ENCODE measurements at regions of chr17 and their contacts with region 1.

Region 1: GRCh38 chr17:72118335-72119076 is 2.3 kb upstream of the SOX9 start:
- DNase-seq: peak in 2 of 5 donors; percentile 4 to 15
- H3K4me3 ChIP-seq: no peak overlapping the region
- H3K4me3 Mint-ChIP-seq: peak overlapping the region in 6 of 8 donors; percentile 17 to 64 (median 49)
- H3K27ac ChIP-seq: no peak overlapping the region
- H3K27ac Mint-ChIP-seq: no peak overlapping the region
- H3K4me1 ChIP-seq: peaks cover 7% of the 10 kb centered on the region
- H3K4me1 Mint-ChIP-seq: peaks cover 7 to 45% (median 15%) of the 10 kb centered on the region in 4 donors
- H3K27me3 ChIP-seq: peaks cover 24% of the 10 kb centered on the region
- H3K27me3 Mint-ChIP-seq: peaks cover 39 to 51% of the 10 kb centered on the region in 2 donors

Region 2: DNA sequence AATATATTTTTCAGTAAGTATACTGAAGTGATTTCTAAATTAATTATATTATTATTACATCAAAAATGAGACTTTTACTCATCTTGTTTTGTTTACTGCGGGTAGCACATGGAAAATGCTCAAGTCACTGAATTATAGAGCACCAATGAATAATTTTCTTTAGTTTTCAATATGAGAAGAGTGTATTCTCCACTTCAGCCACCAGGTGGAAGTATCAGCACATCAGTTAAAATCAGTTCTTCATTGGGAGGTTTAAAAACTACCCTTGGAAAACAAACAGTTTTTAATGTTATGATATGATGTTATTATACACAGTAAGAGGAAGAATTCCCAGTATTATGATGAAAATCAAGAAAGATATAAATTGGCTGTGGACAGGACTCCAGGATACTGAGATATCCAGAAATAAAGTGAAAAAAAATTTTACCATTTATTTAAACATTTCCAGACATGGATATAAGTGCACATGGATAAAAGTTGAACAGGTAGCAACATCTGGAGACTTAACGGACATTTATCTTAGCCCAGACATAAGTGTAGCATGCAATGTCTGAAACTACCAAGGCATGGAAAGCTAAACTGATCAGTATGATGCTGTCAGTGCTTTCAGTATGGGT is 1481.9 kb before region 1 on chr17:
- CTCF ChIA-PET with region 1: no interaction called
- POLR2A ChIA-PET with region 1: no interaction called
- intact Hi-C with region 1: loop called (anchors 5 kb)
- DNase-seq: peak in 3 of 5 donors; percentile 5 to 9 (median 7)
- H3K4me3 ChIP-seq: no peak overlapping the region
- H3K4me3 Mint-ChIP-seq: no peak overlapping the region
- H3K27ac ChIP-seq: no peak overlapping the region
- H3K27ac Mint-ChIP-seq: no peak overlapping the region
- H3K4me1 ChIP-seq: no peaks in the 10 kb centered on the region
- H3K4me1 Mint-ChIP-seq: no peaks in the 10 kb centered on the region
- H3K27me3 ChIP-seq: no peaks in the 10 kb centered on the region
- H3K27me3 Mint-ChIP-seq: no peaks in the 10 kb centered on the region

Region 3: DNA sequence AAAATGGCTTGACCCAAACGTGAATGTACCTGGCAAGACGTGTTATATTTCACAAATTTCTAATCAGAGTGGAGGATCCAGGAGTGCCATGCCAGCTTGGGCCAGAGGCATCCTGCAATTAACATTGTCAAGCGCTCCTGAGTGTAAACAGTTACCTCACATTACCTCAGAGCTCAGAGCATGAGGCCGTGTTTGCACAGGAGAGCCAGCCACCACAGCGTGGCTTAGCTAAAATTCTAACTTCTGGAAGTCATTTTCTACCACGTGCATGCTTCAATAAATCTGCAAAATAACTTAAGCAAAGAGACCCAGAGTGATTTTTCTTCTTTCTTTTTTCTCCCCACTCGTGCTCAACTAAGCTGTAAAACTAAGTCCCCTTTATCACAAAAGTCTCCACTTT is 1180.2 kb before region 1 on chr17:
- CTCF ChIA-PET with region 1: no interaction called
- POLR2A ChIA-PET with region 1: no interaction called
- intact Hi-C with region 1: loop called (anchors 10 kb)
- DNase-seq: no peak
- H3K4me3 ChIP-seq: no peak overlapping the region
- H3K4me3 Mint-ChIP-seq: no peak overlapping the region
- H3K27ac ChIP-seq: no peak overlapping the region
- H3K27ac Mint-ChIP-seq: no peak overlapping the region
- H3K4me1 ChIP-seq: no peaks in the 10 kb centered on the region
- H3K4me1 Mint-ChIP-seq: no peaks in the 10 kb centered on the region
- H3K27me3 ChIP-seq: no peaks in the 10 kb centered on the region
- H3K27me3 Mint-ChIP-seq: no peaks in the 10 kb centered on the region

Region 4: GRCh38 chr17:71472809-71473789 is 645.4 kb before region 1 on chr17:
- CTCF ChIA-PET with region 1: no interaction called
- POLR2A ChIA-PET with region 1: no interaction called
- intact Hi-C with region 1: loop called (anchors 5 kb)
- DNase-seq: no peak
- H3K4me3 ChIP-seq: no peak overlapping the region
- H3K4me3 Mint-ChIP-seq: no peak overlapping the region
- H3K27ac ChIP-seq: no peak overlapping the region
- H3K27ac Mint-ChIP-seq: no peak overlapping the region
- H3K4me1 ChIP-seq: no peaks in the 10 kb centered on the region
- H3K4me1 Mint-ChIP-seq: no peaks in the 10 kb centered on the region
- H3K27me3 ChIP-seq: no peaks in the 10 kb centered on the region
- H3K27me3 Mint-ChIP-seq: peaks cover 0 to 1% of the 10 kb centered on the region in 2 donors

Region 5: GRCh38 chr17:71959154-71959553 is 159.4 kb before region 1 on chr17:
- CTCF ChIA-PET with region 1: no interaction called
- POLR2A ChIA-PET with region 1: no interaction called
- intact Hi-C with region 1: loop called (anchors 5 kb)
- DNase-seq: no peak
- H3K4me3 ChIP-seq: no peak overlapping the region
- H3K4me3 Mint-ChIP-seq: no peak overlapping the region
- H3K27ac ChIP-seq: no peak overlapping the region
- H3K27ac Mint-ChIP-seq: no peak overlapping the region
- H3K4me1 ChIP-seq: no peaks in the 10 kb centered on the region
- H3K4me1 Mint-ChIP-seq: no peaks in the 10 kb centered on the region
- H3K27me3 ChIP-seq: no peaks in the 10 kb centered on the region
- H3K27me3 Mint-ChIP-seq: no peaks in the 10 kb centered on the region

Region 6: GRCh38 chr17:72004611-72005331 is 113.7 kb before region 1 on chr17:
- CTCF ChIA-PET with region 1: no interaction called
- POLR2A ChIA-PET with region 1: no interaction called
- intact Hi-C with region 1: loop called (anchors 5 kb)
- DNase-seq: no peak
- H3K4me3 ChIP-seq: no peak overlapping the region
- H3K4me3 Mint-ChIP-seq: no peak overlapping the region
- H3K27ac ChIP-seq: no peak overlapping the region
- H3K27ac Mint-ChIP-seq: no peak overlapping the region
- H3K4me1 ChIP-seq: no peaks in the 10 kb centered on the region
- H3K4me1 Mint-ChIP-seq: no peaks in the 10 kb centered on the region
- H3K27me3 ChIP-seq: no peaks in the 10 kb centered on the region
- H3K27me3 Mint-ChIP-seq: peaks cover 0 to 2% of the 10 kb centered on the region in 2 donors

Region 7: DNA sequence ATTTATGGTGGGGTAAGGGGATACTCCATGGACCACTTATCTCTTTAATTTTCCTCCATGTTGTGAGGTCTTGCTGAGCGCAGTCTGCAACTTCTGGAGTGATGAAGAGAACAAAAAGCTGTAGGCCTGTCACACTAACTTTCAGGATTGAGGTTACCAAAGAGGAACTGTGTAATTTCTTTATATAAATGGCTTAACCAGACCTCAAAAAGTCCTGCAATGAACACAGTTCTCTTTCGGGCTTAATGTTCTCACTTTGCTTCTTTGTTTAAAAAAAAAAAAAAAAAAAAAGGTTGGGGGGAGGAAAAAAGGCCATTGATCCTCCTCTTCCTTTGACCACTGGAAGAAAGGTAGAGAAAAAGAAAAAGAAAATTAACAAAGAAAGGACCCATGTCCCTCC is 84.5 kb before region 1 on chr17:
- CTCF ChIA-PET with region 1: no interaction called
- POLR2A ChIA-PET with region 1: no interaction called
- intact Hi-C with region 1: no loop called
- DNase-seq: no peak
- H3K4me3 ChIP-seq: no peak overlapping the region
- H3K4me3 Mint-ChIP-seq: no peak overlapping the region
- H3K27ac ChIP-seq: no peak overlapping the region
- H3K27ac Mint-ChIP-seq: no peak overlapping the region
- H3K4me1 ChIP-seq: peaks cover 10% of the 10 kb centered on the region
- H3K4me1 Mint-ChIP-seq: peaks cover 10 to 22% (median 14%) of the 10 kb centered on the region in 4 donors
- H3K27me3 ChIP-seq: no peaks in the 10 kb centered on the region
- H3K27me3 Mint-ChIP-seq: peaks cover 3 to 8% of the 10 kb centered on the region in 2 donors

Region 8: GRCh38 chr17:72053449-72053848 is 65.1 kb before region 1 on chr17:
- CTCF ChIA-PET with region 1: no interaction called
- POLR2A ChIA-PET with region 1: no interaction called
- intact Hi-C with region 1: no loop called
- DNase-seq: no peak
- H3K4me3 ChIP-seq: no peak overlapping the region
- H3K4me3 Mint-ChIP-seq: no peak overlapping the region
- H3K27ac ChIP-seq: no peak overlapping the region
- H3K27ac Mint-ChIP-seq: no peak overlapping the region
- H3K4me1 ChIP-seq: no peaks in the 10 kb centered on the region
- H3K4me1 Mint-ChIP-seq: no peaks in the 10 kb centered on the region
- H3K27me3 ChIP-seq: no peaks in the 10 kb centered on the region
- H3K27me3 Mint-ChIP-seq: peaks cover 0 to 7% of the 10 kb centered on the region in 2 donors

Region 9: DNA sequence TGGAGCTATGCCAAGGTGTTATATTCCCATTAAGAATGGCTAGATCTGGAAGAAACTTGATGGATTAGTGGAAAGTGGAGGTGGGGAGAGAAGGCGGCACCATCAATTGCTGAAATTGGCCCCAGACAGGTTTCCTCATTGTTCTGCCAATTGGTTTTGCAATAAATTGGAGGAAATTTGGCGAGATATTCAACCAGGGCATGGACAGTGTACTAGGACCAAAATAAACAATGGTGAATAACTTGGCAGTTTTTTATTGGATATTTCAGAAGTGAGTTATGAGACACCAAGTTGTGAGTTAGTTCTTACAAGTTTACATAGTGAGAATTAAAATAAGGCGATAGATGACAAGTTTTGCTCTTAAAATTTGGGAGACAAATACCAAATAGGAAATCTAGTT is 38.8 kb before region 1 on chr17:
- CTCF ChIA-PET with region 1: no interaction called
- POLR2A ChIA-PET with region 1: no interaction called
- intact Hi-C with region 1: no loop called
- DNase-seq: no peak
- H3K4me3 ChIP-seq: no peak overlapping the region
- H3K4me3 Mint-ChIP-seq: no peak overlapping the region
- H3K27ac ChIP-seq: no peak overlapping the region
- H3K27ac Mint-ChIP-seq: no peak overlapping the region
- H3K4me1 ChIP-seq: no peaks in the 10 kb centered on the region
- H3K4me1 Mint-ChIP-seq: peaks cover 0 to 9% (median 3%) of the 10 kb centered on the region in 4 donors
- H3K27me3 ChIP-seq: no peaks in the 10 kb centered on the region
- H3K27me3 Mint-ChIP-seq: peaks cover 0 to 3% of the 10 kb centered on the region in 2 donors

Measured in CD4-positive, alpha-beta memory T cell (primary cell).